ENCODE measurements at regions of chr3 and their contacts with region 1.

Region 1: DNA sequence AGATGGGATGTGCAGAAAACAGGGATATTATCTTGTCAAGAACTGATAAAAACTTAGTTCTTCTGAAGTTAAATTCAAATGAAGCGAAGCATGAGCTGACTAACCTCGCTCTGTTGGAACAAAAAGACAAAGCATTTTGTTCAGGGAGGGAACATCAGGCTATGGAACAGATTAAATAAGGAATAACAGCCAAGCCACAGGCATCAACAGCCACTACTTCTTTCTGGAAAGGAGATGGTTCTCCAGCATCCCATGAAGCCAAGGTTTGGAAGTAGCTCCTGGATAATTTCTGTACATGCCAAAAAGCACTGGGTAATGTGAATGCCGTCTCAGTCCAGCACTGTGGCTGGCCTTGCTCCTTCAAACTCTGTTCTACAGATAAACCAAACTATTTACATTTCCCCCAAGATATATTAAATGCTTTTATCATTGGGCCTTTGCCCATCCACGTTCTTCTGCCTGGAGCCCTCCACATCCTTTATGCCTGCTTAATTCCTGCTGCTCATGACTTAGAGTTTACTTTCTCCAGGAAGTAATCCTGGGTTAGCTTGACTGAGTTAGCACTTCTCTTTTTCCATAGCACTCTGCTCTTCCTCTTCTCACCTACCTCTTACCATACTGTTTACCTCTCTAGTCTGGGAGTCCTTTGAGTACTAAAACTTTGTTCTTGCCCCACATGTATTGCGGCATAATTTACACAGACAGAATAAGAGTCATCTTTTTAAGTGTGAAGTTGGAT is 232.0 kb downstream of the CLSTN2 start:
- DNase-seq: no peak
- H3K4me3 Mint-ChIP-seq: no peak overlapping the region
- H3K27ac Mint-ChIP-seq: no peak overlapping the region
- H3K4me1 Mint-ChIP-seq: peaks cover 10% of the 10 kb centered on the region
- H3K27me3 Mint-ChIP-seq: peaks cover 10% of the 10 kb centered on the region
- CTCF ChIP-seq: no peak

Region 2: DNA sequence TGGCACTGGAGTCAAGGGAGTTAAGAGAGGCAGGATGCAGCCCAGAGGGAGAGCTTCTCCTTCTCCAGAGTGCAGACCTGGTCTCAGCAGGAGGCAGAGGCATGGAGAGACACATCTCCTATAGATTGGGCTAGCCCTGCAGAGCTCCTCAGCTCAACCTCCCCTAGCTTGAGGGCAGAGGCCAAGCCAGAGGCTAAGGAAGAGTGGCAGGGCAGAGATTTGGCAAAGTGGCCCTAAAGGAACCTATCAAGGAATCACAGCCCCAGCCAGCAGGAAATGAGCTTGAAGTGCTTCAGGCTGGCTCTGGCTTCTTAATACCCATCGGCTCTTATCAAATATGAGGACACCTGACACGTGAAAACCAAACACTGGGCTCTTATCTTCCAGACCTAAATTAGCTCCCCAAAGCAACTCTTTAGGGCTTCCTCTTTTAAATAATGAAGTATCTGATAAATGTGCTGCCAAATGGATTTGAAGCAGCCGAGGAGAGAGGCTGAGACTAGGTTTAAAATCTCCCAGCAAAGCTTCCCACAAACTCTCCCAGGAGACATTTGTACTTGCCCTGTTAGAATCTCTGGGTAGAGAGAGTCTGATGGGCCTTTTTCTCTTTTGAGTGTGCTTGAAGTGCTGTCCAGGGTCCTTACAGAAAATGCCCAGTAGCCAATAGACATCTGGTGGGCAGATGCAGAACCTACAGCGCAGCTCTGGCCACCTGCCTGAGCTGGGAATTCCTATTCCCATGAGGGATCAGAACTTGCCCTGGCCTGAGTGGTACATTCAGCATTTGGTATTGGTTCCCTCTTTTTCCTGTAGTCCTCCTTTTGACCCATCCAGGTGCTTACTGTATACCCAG is 39.4 kb after region 1 on chr3:
- CTCF ChIA-PET with region 1: interaction called, 3 read pairs
- POLR2A ChIA-PET with region 1: no interaction called
- intact Hi-C with region 1: loop called (anchors 1 kb)
- DNase-seq: peak; percentile 53
- H3K4me3 Mint-ChIP-seq: no peak overlapping the region
- H3K27ac Mint-ChIP-seq: no peak overlapping the region
- H3K4me1 Mint-ChIP-seq: no peaks in the 10 kb centered on the region
- H3K27me3 Mint-ChIP-seq: peaks cover 24% of the 10 kb centered on the region
- CTCF ChIP-seq: no peak

Measured in MCF 10A (cell line).